ENCODE measurements at regions of chr14 and their contacts with region 1.

Region 1: GRCh38 chr14:68905107-68905895 is 73.8 kb downstream of the ACTN1 start:
- DNase-seq: no peak
- H3K4me3 ChIP-seq: no peak overlapping the region
- H3K27ac ChIP-seq: peak overlapping the region; percentile 16 to 64 (median 38)
- H3K4me1 ChIP-seq: peaks cover 0 to 9% (median 3%) of the 10 kb centered on the region in 4 donors
- H3K27me3 ChIP-seq: no peaks in the 10 kb centered on the region
- CTCF ChIP-seq: no peak
- EP300 ChIP-seq: no peak
- POLR2A ChIP-seq: no peak

Region 2: GRCh38 chr14:68749487-68750475 is 155.5 kb before region 1 on chr14:
- in situ Hi-C with region 1: no loop called
- intact Hi-C with region 1: no loop called
- DNase-seq: no peak
- H3K4me3 ChIP-seq: no peak overlapping the region
- H3K27ac ChIP-seq: peak overlapping the region in 3 of 4 donors; percentile 3 to 55 (median 31)
- H3K4me1 ChIP-seq: peaks cover 0 to 9% (median 0%) of the 10 kb centered on the region in 4 donors
- H3K27me3 ChIP-seq: no peaks in the 10 kb centered on the region
- CTCF ChIP-seq: no peak
- EP300 ChIP-seq: no peak
- POLR2A ChIP-seq: no peak

Region 3: GRCh38 chr14:68807148-68807600 is 98.1 kb before region 1 on chr14:
- in situ Hi-C with region 1: no loop called
- intact Hi-C with region 1: no loop called
- DNase-seq: no peak
- H3K4me3 ChIP-seq: no peak overlapping the region
- H3K27ac ChIP-seq: peak overlapping the region; percentile 77 to 87 (median 82)
- H3K4me1 ChIP-seq: peaks cover 28 to 55% (median 35%) of the 10 kb centered on the region in 4 donors
- H3K27me3 ChIP-seq: no peaks in the 10 kb centered on the region
- CTCF ChIP-seq: no peak
- EP300 ChIP-seq: no peak
- POLR2A ChIP-seq: no peak

Region 4: DNA sequence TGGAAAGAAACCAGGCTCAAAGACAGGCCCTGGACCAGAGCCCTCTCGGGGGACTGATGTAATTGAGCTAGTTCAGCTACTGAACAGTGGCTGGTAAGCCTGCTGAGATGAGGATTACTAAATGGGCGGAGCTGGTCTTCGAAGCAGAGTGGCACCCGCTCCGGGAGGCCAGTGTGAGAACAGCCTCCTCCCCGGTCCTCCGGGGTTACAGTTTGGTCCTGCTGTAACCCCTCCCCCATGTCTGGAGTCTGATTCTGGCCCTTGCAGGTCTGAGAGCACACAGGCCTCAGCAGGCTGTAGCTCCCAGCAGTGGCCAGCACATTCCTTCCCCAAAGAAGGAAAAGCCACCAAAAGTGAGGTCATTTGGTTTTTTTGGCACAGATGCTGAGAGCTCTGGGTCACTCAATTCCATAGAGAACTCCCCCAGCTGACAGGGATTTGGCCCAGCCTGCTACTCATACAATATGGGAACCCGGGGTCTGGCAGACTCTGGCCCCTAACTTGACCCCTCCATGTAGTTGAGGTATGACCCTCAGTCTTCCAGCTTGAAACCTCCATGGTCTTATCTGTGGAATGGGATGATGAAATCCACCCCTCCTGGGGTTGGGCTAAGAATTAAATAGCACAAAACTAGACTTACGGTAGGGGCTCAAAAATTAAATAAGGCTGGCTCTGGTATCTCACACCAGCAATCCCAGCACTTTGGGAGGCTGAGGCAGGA is 34.8 kb after region 1 on chr14:
- in situ Hi-C with region 1: no loop called
- intact Hi-C with region 1: loop called (anchors 5 kb)
- DNase-seq: peak; percentile 67
- H3K4me3 ChIP-seq: no peak overlapping the region
- H3K27ac ChIP-seq: peak overlapping the region; percentile 93 to 99 (median 96)
- H3K4me1 ChIP-seq: peaks cover 55 to 98% (median 91%) of the 10 kb centered on the region in 4 donors
- H3K27me3 ChIP-seq: no peaks in the 10 kb centered on the region
- CTCF ChIP-seq: no peak
- EP300 ChIP-seq: peak; percentile 9
- POLR2A ChIP-seq: no peak

Region 5: DNA sequence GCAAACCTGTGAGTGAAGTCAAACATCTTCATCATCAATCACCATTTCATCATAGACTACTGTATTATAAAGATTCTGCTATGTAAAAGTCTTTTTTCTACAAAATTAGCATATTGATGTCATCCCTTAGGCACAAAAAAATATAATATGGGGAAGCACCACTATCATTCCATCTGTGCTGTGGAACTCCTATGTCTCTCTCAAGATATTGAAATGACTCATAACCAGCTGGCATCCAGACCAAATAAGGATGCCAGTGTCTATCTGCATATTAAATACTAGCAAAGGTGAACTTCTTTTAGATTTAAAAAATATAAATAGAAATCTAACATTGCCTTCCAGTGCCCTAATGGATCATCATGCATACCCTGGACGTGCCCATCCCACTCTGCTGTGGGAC is 265.5 kb after region 1 on chr14:
- in situ Hi-C with region 1: no loop called
- intact Hi-C with region 1: no loop called
- DNase-seq: no peak
- H3K4me3 ChIP-seq: no peak overlapping the region
- H3K27ac ChIP-seq: no peak overlapping the region
- H3K4me1 ChIP-seq: no peaks in the 10 kb centered on the region
- H3K27me3 ChIP-seq: no peaks in the 10 kb centered on the region
- CTCF ChIP-seq: no peak
- EP300 ChIP-seq: no peak
- POLR2A ChIP-seq: no peak

Measured in transverse colon (tissue), 4 donors.